ENCODE measurements at regions of chr2 and their contacts with region 1.

Region 1: DNA sequence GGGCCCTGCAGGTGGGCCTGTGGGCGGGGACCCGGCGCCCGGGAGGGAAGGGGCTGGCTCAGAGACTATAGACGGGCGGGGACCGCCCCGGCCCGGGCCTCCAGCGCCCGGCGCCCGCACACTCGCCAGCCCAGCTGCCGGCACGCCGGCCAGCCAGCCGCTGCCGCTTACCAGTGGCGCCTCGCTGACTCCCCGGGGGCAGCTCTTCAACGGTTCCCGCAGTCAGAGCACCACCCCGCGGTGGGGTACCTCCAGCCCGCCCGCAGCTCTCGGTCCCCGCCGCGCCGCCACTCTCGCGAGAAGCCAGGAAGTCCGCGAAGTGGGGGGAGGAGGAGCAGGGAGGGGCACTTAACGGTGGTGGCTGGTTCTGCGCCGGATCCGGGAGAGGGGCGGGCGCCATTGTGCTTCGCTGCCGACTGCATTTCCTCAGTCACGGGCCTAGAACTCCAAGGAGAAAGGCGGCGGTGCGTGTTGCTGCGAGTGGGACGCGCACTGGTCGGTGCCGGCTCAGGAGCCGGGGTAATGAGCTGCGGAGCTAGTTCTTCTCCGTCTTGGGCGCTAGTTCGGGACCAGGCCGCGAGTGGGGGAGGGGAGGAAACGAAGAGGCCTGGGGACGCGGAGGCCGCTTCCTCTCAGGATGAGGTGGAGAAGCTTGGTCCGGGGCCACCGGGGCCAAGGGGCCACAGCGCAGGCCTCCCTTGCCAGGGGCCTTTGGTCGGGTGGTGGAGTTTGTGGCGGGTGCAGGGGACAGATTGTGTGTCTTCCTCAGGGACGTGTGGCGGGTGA is at the start of gene MARCHF7:
- DNase-seq: peak; percentile 98
- H3K4me3 Mint-ChIP-seq: peak within 1 kb of the TSS; percentile 99
- H3K27ac Mint-ChIP-seq: peak within 1 kb of the TSS; percentile 100
- H3K4me1 Mint-ChIP-seq: peaks cover 44% of the 10 kb centered on the region
- H3K27me3 Mint-ChIP-seq: no peaks in the 10 kb centered on the region
- total RNA-seq, gene MARCHF7: 81.5 to 82.4 TPM

Region 2: GRCh38 chr2:158903711-158904443 is 808.5 kb before region 1 on chr2:
- CTCF ChIA-PET with region 1: interaction called, 3 read pairs
- intact Hi-C with region 1: loop called (anchors 5 kb)
- DNase-seq: no peak
- H3K4me3 Mint-ChIP-seq: no peak overlapping the region
- H3K27ac Mint-ChIP-seq: no peak overlapping the region
- H3K4me1 Mint-ChIP-seq: no peaks in the 10 kb centered on the region
- H3K27me3 Mint-ChIP-seq: no peaks in the 10 kb centered on the region

Region 3: DNA sequence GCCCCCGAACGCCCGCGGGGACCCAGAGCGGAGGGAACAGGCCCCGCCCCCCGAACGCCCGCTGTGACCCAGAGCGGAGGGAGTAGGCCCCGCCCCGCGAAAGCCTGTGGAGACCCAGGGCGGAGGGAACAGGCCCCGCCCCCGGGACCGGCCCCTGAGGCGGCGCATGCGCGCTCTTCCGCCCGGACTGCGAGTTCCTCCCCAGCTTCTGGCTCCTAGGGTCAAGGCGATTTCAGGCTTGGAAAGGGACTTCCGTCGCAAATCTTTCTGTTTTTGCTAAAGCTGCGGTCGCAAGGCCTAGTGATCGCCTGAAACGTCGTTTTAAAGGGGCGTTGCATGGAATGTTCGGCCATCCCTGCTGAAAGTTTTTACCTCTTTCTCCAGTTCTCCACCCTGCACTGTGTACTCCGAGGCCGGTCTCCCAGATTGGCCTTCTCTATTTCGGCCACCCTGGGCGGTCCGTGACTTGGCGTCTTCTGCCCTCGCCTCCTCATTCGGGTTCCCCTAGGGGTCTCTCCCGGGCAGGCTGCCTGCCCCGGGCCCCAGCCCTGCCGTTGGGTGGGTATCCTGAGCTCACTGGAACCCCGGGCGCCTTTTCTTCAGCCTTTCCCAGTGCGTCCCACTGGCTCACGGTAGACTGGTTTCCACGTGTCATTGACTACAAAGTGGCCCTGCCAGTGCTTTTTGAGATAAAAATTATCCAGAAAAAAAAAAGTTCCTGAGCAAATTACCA is 425.5 kb before region 1 on chr2:
- CTCF ChIA-PET with region 1: no interaction called
- intact Hi-C with region 1: loop called (anchors 1 kb)
- DNase-seq: peak; percentile 97
- H3K4me3 Mint-ChIP-seq: peak overlapping the region; percentile 87
- H3K27ac Mint-ChIP-seq: peak overlapping the region; percentile 75
- H3K4me1 Mint-ChIP-seq: peaks cover 26% of the 10 kb centered on the region
- H3K27me3 Mint-ChIP-seq: no peaks in the 10 kb centered on the region

Region 4: DNA sequence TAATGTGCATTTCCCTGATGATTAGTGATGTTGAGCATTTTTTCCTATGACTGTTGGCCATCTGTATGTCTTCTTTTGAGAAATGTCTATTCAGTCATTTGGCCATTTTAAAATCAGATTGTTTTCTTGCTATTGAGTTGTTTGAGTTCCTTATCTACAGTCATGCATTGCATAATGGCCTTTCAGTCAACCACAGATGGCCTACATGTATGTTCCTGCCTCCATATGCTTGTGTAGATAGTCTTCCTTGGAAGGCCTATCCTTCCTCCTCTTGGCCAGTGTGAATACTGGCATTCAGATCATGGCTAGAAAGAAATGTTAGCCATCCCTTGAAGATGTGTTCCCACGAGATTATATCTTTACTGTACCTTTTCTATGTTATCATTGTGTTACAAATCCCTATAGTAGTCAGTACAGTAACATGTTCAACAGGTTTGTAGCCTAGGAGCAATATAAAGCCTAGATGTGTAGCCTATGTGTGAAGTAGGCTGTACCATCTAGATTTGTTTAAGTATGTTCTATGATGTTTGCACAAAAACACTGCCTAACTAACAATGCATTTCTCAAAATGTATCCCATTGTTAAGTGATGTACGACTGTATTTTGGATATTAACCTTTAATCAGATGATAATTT is 151.3 kb after region 1 on chr2:
- CTCF ChIA-PET with region 1: no interaction called
- intact Hi-C with region 1: no loop called
- DNase-seq: no peak
- H3K4me3 Mint-ChIP-seq: no peak overlapping the region
- H3K27ac Mint-ChIP-seq: no peak overlapping the region
- H3K4me1 Mint-ChIP-seq: peaks cover 8% of the 10 kb centered on the region
- H3K27me3 Mint-ChIP-seq: no peaks in the 10 kb centered on the region

Region 5: GRCh38 chr2:159879051-159879604 is 166.8 kb after region 1 on chr2:
- CTCF ChIA-PET with region 1: no interaction called
- intact Hi-C with region 1: loop called (anchors 1 kb)
- DNase-seq: peak; percentile 76
- H3K4me3 Mint-ChIP-seq: no peak overlapping the region
- H3K27ac Mint-ChIP-seq: peak overlapping the region; percentile 77
- H3K4me1 Mint-ChIP-seq: peaks cover 45% of the 10 kb centered on the region
- H3K27me3 Mint-ChIP-seq: no peaks in the 10 kb centered on the region

Region 6: DNA sequence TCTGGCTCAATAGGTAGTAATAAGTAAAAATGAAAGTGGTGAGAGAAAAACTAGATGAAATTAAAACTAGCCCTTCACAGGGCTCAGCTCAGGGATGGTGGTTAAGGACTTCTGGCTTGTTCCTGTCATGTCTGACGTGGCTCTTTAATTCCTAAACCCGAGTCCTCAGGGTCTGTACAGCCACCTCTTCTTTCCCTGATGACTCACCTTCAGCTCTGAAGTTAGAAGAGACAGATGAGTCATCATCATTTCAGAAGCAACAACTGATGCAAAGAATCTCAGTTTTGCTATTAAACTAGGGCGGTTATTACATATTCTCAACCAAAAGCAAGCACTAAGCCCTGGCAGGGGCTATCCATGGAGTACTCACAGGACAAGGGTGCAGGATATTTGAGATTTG is 511.7 kb after region 1 on chr2:
- CTCF ChIA-PET with region 1: no interaction called
- intact Hi-C with region 1: loop called (anchors 10 kb)
- DNase-seq: peak; percentile 58
- H3K4me3 Mint-ChIP-seq: no peak overlapping the region
- H3K27ac Mint-ChIP-seq: peak overlapping the region; percentile 50
- H3K4me1 Mint-ChIP-seq: peaks cover 52% of the 10 kb centered on the region
- H3K27me3 Mint-ChIP-seq: peaks cover 17% of the 10 kb centered on the region

Region 7: GRCh38 chr2:161308178-161308955 is 1596.0 kb after region 1 on chr2 and contains the start of gene PSMD14:
- CTCF ChIA-PET with region 1: no interaction called
- intact Hi-C with region 1: loop called (anchors 5 kb)
- DNase-seq: peak; percentile 96
- H3K4me3 Mint-ChIP-seq: peak within 1 kb of the TSS; percentile 86
- H3K27ac Mint-ChIP-seq: peak within 1 kb of the TSS; percentile 91
- H3K4me1 Mint-ChIP-seq: peaks cover 35% of the 10 kb centered on the region
- H3K27me3 Mint-ChIP-seq: no peaks in the 10 kb centered on the region
- total RNA-seq, gene PSMD14: 76.2 to 79.4 TPM

Measured in activated naive CD4-positive, alpha-beta T cell treated with anti-CD3 and anti-CD28 coated beads for 36 hours (primary cell).